ENCODE measurements at regions of chr1 and their contacts with region 1.

Region 1: DNA sequence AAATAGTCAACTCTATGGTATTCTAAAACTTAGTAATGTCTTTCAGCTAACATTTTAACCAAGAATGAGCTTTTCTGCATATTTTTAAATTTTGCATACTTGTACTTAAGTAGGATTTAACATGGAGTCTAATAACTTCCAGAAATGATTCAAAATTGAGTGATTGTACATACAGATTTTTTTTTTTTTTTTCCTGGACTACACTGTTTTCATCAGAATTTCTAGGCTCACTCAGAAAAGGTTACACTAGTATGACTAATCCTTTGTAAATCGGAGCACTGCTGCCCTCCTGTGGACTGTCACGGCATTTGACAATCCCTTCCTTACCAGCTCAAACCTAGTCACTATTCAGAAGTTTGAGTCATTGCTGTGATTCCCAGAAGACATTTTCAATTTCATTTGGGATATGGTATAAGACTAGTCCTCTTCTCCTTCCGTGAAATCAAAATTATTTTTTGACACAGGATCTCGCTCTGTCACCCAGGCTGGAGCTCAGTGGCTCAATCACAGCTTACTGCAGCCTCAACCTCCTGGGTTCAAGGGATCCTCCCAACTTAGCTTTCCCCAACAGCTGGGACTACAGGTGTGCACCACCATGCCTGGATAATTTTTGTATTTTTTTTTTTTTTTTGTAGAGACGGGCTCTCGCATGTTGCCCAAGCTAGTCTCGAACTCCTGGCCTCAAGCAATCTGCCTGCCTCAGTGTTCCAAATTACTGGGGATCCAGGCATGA is 45.5 kb downstream of the CD46 start:
- DNase-seq: peak; percentile 86
- ATAC-seq: peak; percentile 86
- H3K4me3 Mint-ChIP-seq: no peak overlapping the region
- H3K27ac Mint-ChIP-seq: no peak overlapping the region
- H3K4me1 Mint-ChIP-seq: peaks cover 41% of the 10 kb centered on the region
- H3K27me3 Mint-ChIP-seq: no peaks in the 10 kb centered on the region

Region 2: DNA sequence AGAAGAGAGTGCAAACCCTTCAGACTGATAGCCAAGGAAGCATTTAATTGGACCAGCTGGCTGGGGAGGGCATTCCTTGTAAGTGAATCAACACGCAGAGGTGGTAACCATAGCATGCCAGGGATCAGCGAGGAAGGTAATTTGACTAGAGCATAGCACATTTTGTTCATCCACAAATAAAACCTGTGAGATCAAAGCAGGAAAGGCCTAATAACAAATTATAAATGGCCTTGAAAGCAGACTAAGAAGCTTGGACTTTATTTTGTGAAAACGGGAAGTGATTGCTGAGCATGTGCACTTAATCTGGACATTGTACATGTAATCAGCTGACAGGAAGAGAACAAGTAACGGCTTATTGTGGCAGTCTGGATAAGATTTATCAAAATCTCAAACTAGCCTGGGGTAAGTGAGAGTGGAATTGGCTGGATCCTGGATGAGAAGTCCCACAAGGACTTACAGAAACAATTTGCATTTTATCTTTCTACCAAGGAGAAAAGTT is 487.6 kb before region 1 on chr1:
- CTCF ChIA-PET with region 1: no interaction called
- POLR2A ChIA-PET with region 1: no interaction called
- DNase-seq: no peak
- ATAC-seq: no peak
- H3K4me3 Mint-ChIP-seq: peak overlapping the region; percentile 57
- H3K27ac Mint-ChIP-seq: peak overlapping the region; percentile 86
- H3K4me1 Mint-ChIP-seq: peaks cover 17% of the 10 kb centered on the region
- H3K27me3 Mint-ChIP-seq: no peaks in the 10 kb centered on the region

Region 3: DNA sequence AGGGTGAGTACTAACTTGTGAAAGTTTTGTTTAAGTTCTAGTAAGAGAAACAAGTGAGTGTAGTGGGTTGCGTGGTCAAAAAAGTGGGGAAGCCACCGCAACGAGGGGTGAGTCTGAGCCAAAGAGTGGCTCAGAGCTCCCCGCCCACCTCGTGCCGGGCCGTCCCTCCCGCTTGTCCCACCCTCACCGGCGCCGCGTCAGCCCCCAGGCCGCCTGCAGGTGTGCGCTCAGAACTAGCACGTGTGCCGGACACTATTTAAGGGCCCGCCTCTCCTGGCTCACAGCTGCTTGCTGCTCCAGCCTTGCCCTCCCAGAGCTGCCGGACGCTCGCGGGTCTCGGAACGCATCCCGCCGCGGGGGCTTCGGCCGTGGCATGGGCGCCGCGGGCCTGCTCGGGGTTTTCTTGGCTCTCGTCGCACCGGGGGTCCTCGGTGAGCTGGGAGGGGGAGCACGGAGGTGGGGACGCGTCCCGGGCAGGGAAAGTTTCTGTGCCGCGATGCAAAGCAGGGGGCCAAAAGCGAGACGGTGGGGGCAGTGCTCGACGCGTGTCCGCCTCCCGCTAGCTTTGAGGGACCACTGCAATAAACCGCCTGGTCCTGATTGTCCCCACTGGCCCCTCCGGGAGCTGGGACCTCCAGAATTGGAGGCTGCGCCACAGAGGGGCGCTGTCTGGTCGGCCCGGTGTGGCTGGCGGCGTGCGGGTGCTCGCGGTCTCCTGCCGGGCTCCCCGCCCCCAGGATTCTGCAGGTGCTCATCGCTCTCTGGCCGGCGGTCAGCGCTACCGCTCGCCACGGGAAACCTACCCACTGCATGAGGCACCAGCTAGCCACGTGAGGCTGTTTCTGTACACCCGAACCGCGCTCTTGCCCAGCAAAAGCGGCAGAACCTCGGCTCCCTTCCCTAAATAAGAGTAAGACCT is 343.1 kb before region 1 on chr1 and contains the start of gene CR2:
- CTCF ChIA-PET with region 1: no interaction called
- POLR2A ChIA-PET with region 1: no interaction called
- DNase-seq: peak; percentile 50
- ATAC-seq: peak; percentile 77
- H3K4me3 Mint-ChIP-seq: peak within 1 kb of the TSS; percentile 55
- H3K27ac Mint-ChIP-seq: no peak within 1 kb of the TSS
- H3K4me1 Mint-ChIP-seq: peaks cover 17% of the 10 kb centered on the region
- H3K27me3 Mint-ChIP-seq: peaks cover 48% of the 10 kb centered on the region
- total RNA-seq, gene CR2: not detected

Region 4: DNA sequence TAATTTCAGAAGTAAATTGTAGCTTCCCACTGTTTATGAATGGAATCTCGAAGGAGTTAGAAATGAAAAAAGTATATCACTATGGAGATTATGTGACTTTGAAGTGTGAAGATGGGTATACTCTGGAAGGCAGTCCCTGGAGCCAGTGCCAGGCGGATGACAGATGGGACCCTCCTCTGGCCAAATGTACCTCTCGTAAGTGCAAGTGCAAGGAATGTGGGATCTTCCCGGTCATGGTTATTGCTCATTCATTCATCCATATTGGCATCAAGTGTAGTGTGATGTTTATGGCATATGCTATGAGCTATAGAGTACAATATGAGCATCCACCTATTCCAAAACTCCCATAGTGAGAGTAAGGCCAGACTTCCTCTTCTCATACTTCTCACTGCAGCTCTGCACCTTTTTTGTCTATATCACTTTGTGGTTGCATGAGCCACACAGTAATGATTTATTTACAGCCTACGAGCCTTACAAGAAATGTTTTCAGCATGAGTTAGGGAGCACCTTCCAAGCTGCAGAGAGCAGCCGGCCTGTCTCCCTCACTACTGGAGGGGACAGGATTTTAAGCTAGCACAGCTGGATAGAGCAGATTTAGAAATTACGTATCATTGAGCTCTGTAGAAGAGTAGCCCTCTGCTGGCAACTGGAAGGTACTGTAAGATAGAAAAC is 177.4 kb before region 1 on chr1:
- CTCF ChIA-PET with region 1: interaction called, 12 read pairs
- POLR2A ChIA-PET with region 1: no interaction called
- DNase-seq: peak; percentile 40
- ATAC-seq: peak; percentile 91
- H3K4me3 Mint-ChIP-seq: no peak overlapping the region
- H3K27ac Mint-ChIP-seq: no peak overlapping the region
- H3K4me1 Mint-ChIP-seq: peaks cover 2% of the 10 kb centered on the region
- H3K27me3 Mint-ChIP-seq: no peaks in the 10 kb centered on the region

Region 5: GRCh38 chr1:207711285-207711684 is 86.1 kb before region 1 on chr1:
- CTCF ChIA-PET with region 1: interaction called, 38 read pairs
- POLR2A ChIA-PET with region 1: no interaction called
- DNase-seq: no peak
- ATAC-seq: no peak
- H3K4me3 Mint-ChIP-seq: no peak overlapping the region
- H3K27ac Mint-ChIP-seq: no peak overlapping the region
- H3K4me1 Mint-ChIP-seq: no peaks in the 10 kb centered on the region
- H3K27me3 Mint-ChIP-seq: peaks cover 2% of the 10 kb centered on the region

Region 6: DNA sequence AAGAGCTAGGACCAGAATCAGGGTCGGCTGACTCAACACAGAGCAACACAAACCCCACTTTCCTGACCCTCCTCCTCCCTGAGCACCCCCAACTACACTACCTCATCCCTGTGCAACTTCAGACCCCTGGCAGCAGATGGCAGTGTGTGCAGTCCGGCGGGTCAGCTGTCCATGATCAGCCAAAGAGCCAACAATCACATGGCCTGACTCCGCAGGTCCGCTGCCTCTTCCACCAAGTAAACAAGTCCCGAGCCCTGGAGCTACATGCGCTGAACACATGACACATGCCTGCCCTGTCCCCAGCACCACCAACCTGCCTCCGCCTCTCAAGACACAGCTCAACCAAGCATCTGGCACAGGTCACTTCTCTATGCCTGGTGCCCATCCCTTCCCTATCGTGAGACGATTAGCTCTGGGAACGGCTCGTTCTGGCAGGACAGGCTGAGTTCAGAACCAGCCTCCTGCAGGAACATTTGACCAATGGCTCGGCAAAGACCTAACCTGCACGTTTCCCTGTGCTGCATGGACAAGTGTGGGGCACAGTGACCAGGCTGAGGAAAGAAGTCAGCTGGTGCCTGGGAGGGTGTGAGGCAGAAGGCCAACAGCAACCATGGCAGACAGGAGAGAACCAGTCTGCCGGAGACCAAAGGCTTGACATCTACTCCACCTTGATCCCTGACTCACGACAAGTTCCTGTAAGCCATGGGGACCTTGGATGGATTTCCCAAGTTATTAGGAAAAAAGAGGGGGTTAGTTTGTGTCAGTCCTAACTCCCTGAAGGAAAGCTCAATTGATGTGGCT is 14.7 kb after region 1 on chr1:
- CTCF ChIA-PET with region 1: interaction called, 30 read pairs
- POLR2A ChIA-PET with region 1: interaction called, 3 read pairs
- DNase-seq: no peak
- ATAC-seq: no peak
- H3K4me3 Mint-ChIP-seq: no peak overlapping the region
- H3K27ac Mint-ChIP-seq: no peak overlapping the region
- H3K4me1 Mint-ChIP-seq: peaks cover 37% of the 10 kb centered on the region
- H3K27me3 Mint-ChIP-seq: no peaks in the 10 kb centered on the region

Region 7: DNA sequence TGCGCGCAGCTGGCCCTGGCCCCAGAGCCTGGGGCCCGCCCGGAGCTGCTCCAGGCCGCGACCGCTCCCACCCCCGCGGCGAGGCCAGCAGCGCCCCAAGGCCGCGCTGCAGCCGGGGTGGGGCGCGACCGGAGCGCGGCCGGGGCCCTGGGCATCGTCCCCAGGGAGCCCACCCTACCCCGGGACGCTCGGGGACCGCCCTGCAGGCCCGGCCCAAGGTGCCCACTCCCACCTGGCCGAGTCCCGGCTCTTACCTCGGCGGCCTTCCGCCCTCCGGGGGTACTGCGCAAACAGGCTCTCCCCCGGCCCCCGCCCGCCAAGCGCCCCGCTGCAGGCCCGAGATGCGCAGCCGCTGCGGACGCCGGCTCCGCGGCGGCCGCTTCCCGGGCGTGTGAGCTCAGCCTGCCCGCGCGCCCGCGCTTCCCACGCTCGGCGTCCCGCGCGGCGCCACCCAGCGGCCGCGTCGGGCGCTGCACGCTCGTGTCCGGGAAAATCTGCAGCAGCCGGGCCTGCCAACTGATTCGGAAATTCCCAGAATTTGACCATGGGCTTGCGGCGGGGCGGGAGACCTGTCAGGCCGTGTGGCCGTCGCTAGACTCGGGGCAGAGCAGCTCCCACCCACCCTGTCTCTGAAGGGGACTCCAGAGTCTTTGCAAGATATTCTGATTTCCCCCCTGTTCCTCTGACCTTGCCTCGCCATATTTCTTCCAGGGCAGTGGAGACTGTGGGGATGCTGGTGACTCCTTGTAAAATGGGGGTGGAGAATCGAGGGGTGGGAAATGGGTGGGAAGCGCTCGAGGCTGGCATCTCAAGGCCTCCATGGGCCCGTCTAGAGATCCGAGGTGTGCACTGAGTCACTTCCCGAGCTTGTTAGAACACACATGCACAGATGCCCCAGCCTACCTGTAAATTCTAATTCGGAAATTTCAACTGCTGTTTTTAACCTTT is 71.7 kb after region 1 on chr1:
- CTCF ChIA-PET with region 1: interaction called, 44 read pairs
- POLR2A ChIA-PET with region 1: no interaction called
- DNase-seq: peak; percentile 70
- ATAC-seq: peak; percentile 69
- H3K4me3 Mint-ChIP-seq: peak overlapping the region; percentile 93
- H3K27ac Mint-ChIP-seq: peak overlapping the region; percentile 86
- H3K4me1 Mint-ChIP-seq: peaks cover 77% of the 10 kb centered on the region
- H3K27me3 Mint-ChIP-seq: no peaks in the 10 kb centered on the region

Region 8: GRCh38 chr1:207885129-207886032 is 88.0 kb after region 1 on chr1:
- CTCF ChIA-PET with region 1: interaction called, 20 read pairs
- POLR2A ChIA-PET with region 1: no interaction called
- DNase-seq: peak; percentile 84
- ATAC-seq: peak; percentile 66
- H3K4me3 Mint-ChIP-seq: no peak overlapping the region
- H3K27ac Mint-ChIP-seq: peak overlapping the region; percentile 18
- H3K4me1 Mint-ChIP-seq: peaks cover 34% of the 10 kb centered on the region
- H3K27me3 Mint-ChIP-seq: peaks cover 2% of the 10 kb centered on the region

Measured in activated CD8-positive, alpha-beta T cell treated with anti-CD3 and anti-CD28 coated beads, Interleukin-2, amount 10 ng/mL, durations not matched to agents 7 days and 5 days (primary cell).